HepG2 (cell line): ENCODE measurements at regions of chr12 and their contacts with region 1.

Region 1: DNA sequence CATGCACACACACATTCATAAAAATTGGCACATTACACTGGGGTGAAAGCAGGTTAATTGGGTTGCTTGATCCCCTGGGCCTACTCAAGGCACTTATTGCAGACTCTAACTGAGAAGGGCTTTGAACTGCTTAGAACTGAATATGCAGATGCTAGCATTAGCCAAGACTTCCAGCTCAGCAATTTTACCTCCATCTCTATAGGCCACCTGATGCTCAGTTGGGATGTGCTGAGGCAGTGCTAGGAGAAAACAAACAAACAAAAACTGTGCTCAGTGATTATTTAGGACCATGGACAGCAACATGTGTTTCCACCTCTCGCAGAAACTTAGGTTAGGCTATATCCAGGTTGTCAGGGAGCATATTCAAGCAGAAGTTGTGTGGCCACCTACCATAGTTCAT is 124.8 kb upstream of the WSCD2 start:
- DNase-seq: no peak
- ATAC-seq: no peak
- H3K4me3 ChIP-seq: no peak overlapping the region
- H3K27ac ChIP-seq: no peak overlapping the region
- H3K4me1 ChIP-seq: no peaks in the 10 kb centered on the region
- H3K27me3 ChIP-seq: no peaks in the 10 kb centered on the region
- CTCF ChIP-seq: no peak
- EP300 ChIP-seq: no peak
- POLR2A ChIP-seq: no peak
- RAD21 ChIP-seq: no peak

Region 2: DNA sequence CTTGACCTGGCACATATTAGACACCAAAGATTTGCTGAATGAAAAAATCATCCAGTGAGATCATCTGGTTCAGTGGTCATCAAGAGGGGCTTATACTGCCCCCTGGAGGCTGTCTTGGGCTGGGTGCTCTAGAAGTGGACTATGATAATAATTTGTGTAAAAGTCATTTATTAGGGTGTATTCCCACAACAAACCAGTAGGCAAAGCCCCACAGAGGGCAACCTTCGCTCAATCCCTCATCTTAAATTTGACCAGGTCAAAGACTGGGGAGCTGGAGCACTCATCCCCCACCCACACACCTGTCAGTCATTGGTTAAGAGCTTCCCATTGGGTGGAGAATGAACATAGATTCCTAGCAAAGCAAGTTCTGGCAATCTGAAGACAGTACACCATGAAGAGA is 490.7 kb after region 1 on chr12:
- CTCF ChIA-PET with region 1: no interaction called
- POLR2A ChIA-PET with region 1: no interaction called
- in situ Hi-C with region 1: loop called (anchors 10 kb)
- intact Hi-C with region 1: no loop called
- DNase-seq: peak; percentile 18
- ATAC-seq: peak; percentile 44; the same call in 1 of the 3 replicates
- H3K4me3 ChIP-seq: no peak overlapping the region
- H3K27ac ChIP-seq: no peak overlapping the region
- H3K4me1 ChIP-seq: no peaks in the 10 kb centered on the region
- H3K27me3 ChIP-seq: peaks cover 0 to 4% of the 10 kb centered on the region in 2 experiments; a peak in 1 of 5 replicates
- CTCF ChIP-seq: peak; percentile 33; the same call in 1 of the 2 replicates
- EP300 ChIP-seq: no peak
- POLR2A ChIP-seq: no peak
- RAD21 ChIP-seq: no peak